ENCODE measurements at regions of chr17 and their contacts with region 1.

Region 1: GRCh38 chr17:49997791-49998703 is 3.0 kb upstream of the DLX3 start:
- DNase-seq: peak; percentile 91
- H3K4me3 ChIP-seq: no peak overlapping the region
- H3K27ac ChIP-seq: no peak overlapping the region
- H3K4me1 ChIP-seq: peaks cover 5% of the 10 kb centered on the region
- CTCF ChIP-seq: peak; percentile 92

Region 2: DNA sequence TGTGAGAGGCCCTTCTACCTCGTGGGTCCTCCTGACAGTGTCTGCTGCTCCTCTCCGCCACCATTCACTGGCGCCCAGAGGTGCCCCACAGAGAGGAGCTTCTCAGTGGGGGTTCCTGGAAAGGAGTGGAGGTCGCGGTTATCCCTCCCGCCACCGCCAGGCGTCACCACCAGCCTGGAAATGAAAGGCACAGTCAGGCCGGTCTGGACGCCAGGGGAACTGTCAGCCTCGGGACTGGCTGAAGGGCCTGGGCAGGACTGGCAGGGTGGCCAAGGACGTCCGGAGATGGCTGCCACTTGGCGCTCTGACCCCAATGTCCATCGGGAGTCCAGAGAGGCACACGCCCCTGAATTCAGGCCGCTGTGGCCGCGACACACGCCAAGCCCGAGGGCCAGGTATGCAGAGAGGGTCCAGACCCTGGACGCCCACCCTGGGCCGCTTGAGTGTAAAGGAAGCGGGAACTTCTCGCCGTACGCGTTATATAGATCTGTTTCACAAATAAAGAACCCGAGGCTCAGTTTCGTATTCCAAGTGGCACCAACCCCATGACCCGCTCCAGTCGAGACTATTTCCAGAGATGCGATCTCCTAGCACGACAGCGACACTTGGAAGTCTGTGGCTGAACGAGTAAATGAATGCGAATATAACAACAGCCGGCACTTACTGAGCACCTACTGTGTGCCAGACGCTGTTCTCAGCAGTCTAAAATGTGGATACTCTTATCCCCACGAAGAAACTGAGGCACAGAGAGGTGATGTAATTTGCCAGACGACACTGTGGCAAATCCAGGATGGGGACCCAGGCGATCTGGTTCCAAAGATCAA is 430.0 kb before region 1 on chr17:
- CTCF ChIA-PET with region 1: no interaction called
- POLR2A ChIA-PET with region 1: no interaction called
- intact Hi-C with region 1: loop called (anchors 1 kb)
- DNase-seq: peak; percentile 83
- H3K4me3 ChIP-seq: no peak overlapping the region
- H3K27ac ChIP-seq: no peak overlapping the region
- H3K4me1 ChIP-seq: no peaks in the 10 kb centered on the region
- CTCF ChIP-seq: peak; percentile 88

Region 3: DNA sequence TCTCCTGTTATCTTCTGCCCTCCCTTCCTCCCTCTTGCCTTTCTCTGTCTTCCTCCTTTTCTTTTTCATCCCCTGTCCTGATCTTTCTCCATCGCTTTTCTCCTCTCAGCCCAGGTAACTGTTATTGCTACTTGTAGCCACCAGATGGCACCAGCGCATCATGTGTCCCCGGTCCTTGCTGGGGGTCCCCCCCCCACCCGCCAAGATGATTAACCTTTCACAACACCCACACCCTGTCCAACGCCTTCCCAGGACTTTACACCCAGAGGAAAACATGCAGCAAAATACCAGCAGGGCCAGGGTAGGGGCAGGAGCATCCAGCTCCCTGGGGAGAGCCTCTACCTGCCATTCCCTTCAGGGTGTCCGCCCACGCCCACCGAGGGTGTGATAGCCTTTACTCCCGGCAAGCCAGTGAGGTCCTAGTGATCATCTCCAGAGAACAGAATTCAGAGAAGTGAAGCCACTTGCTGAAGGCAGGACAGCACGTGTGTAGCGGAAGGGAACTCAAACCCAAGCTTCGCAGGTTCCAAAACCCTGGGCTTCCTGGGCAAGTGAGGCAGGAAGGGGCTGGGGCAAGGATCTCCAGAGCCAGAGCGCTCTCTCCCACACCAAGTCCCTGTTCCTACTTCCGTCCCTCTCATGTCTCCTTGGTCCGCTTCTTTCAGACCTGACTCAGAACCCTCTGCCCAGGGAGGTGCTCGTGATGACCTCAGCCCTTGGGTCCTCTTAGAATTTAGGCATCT is 136.7 kb before region 1 on chr17:
- CTCF ChIA-PET with region 1: interaction called, 4 read pairs
- POLR2A ChIA-PET with region 1: no interaction called
- intact Hi-C with region 1: loop called (anchors 1 kb)
- DNase-seq: peak; percentile 63
- H3K4me3 ChIP-seq: no peak overlapping the region
- H3K27ac ChIP-seq: no peak overlapping the region
- H3K4me1 ChIP-seq: no peaks in the 10 kb centered on the region
- CTCF ChIP-seq: peak; percentile 96

Region 4: DNA sequence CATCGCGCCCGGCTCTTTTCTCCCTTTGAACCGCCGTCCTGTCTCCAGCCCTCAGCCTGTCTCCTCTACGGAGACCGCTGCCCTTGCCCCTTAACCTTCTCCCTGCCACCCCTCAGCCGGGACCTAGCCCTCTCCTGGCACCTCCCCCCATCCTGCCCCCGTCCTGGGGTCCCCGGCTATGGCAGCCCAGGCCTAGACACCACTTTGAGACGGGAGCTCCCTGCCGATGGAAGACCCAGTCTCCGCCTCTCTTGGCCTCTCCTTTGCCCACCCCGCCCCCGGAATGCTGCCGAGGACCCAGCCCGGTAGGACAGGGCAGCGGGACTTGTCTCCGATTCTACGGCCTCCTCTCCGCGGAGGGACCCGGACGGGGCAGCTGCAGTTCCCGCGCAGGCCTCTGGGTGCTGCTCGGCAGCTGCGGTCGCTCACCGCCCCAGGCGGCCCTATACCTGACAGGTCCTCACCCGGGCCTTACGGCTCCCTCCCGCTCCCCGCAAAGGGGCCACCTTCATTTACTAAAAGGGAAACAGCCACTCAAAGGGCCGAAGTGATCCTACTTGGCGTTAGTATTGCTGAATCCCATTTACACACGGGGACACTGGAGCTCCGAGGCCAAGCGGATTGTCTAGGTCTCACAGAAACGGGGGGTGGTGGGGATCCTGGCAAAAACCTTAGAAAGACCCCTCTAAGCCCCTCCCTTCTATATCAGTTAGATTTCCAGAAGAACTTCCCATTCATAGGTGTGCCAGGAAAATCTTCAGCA is 117.6 kb before region 1 on chr17:
- CTCF ChIA-PET with region 1: interaction called, 3 read pairs
- POLR2A ChIA-PET with region 1: no interaction called
- intact Hi-C with region 1: loop called (anchors 1 kb)
- DNase-seq: peak; percentile 58
- H3K4me3 ChIP-seq: no peak overlapping the region
- H3K27ac ChIP-seq: no peak overlapping the region
- H3K4me1 ChIP-seq: no peaks in the 10 kb centered on the region
- CTCF ChIP-seq: peak; percentile 83

Region 5: DNA sequence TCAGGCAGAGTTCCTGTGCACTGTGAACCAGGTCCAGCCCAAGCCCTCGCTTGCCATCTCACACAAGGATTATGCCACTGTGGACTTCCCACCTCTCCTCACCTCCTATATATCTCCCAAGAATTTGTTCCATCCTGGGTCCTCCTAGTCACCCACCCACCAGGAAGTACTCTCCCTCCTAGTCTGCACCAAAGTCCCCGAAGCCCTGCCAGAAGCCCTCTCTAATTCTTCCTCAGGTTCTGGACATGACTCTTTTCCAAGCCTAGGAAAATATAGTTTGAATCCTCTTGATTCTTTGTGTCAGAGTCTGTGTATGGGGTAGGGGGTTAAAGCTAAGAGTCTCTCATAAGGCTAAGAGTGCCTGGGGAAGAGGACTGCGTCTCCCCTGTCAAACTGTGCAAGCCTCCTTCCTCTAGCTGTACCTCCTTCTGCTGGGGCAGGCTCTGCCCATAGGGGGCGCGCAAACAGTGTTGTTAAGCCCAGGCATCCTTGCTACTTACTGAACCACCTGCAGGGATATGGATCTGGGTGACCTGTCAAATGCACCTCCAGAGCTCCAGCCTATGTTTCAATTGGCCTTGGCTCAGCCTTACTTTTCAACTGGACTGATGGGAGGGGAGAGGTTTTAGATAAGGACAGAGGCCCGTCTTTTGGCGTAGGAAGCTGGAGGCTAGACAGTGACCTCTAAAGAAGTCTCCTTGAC is 45.7 kb before region 1 on chr17:
- CTCF ChIA-PET with region 1: interaction called, 5 read pairs
- POLR2A ChIA-PET with region 1: interaction called, 5 read pairs
- intact Hi-C with region 1: loop called (anchors 1 kb)
- DNase-seq: peak; percentile 77
- H3K4me3 ChIP-seq: no peak overlapping the region
- H3K27ac ChIP-seq: no peak overlapping the region
- H3K4me1 ChIP-seq: no peaks in the 10 kb centered on the region
- CTCF ChIP-seq: peak; percentile 95

Region 6: GRCh38 chr17:50013079-50013478 is 15.0 kb after region 1 on chr17:
- CTCF ChIA-PET with region 1: no interaction called
- POLR2A ChIA-PET with region 1: no interaction called
- intact Hi-C with region 1: no loop called
- DNase-seq: no peak
- H3K4me3 ChIP-seq: no peak overlapping the region
- H3K27ac ChIP-seq: no peak overlapping the region
- H3K4me1 ChIP-seq: peaks cover 2% of the 10 kb centered on the region
- CTCF ChIP-seq: no peak

Region 7: GRCh38 chr17:50055426-50056230 is 57.6 kb after region 1 on chr17 and contains the start of gene ITGA3:
- CTCF ChIA-PET with region 1: no interaction called
- POLR2A ChIA-PET with region 1: no interaction called
- intact Hi-C with region 1: no loop called
- DNase-seq: peak; percentile 78
- H3K4me3 ChIP-seq: peak within 1 kb of the TSS; percentile 83
- H3K27ac ChIP-seq: peak within 1 kb of the TSS; percentile 67
- H3K4me1 ChIP-seq: peaks cover 64% of the 10 kb centered on the region
- CTCF ChIP-seq: no peak
- total RNA-seq, gene ITGA3: 23.2 and 30.7 TPM in 2 replicates

Measured in OCI-LY7 (cell line).